Activated CD4-positive, alpha-beta memory T cell treated with anti-CD3 and anti-CD28 coated beads, Interleukin-2, amount 10 ng/mL, durations not matched to agents 7 days and 5 days (primary cell): ENCODE measurements at regions of chr14 and their contacts with region 1.

Region 1: DNA sequence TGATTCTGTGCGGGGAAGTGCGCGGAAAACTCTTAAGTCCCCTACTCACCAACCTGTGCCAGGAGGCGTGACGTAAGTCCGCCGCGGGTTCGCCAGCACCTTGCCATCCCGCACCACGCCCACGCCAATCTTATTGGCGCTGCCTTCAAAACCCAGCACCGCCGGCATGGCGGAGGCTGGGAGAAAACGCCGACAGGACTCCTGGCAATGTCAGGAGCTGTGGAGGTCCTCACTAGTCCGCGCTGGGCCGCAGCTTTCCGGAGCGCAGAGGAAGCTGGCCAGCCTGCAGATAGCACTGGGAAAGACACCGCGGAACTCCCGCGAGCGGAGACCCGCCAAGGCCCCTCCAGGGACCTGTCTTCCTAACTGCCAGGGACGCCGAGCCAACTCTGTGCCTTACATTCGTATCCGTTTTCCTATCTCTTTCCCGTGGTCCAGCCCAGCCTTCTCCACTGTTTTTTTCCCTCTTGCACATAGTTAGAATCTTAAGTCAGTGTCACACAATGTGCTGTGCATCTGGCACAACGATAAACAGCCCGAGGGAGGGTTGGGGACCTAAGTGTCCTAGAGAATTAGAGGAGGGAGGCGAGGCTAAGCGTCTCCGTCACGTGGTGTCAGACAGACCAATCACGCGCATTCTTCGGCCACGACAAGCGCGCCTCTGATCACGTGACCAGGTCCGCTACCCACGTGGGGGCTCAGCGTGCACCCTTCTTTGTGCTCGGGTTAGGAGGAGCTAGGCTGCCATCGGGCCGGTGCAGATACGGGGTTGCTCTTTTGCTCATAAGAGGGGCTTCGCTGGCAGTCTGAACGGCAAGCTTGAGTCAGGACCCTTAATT is at the starts of genes APEX1 and OSGEP:
- DNase-seq: peak; percentile 99
- H3K4me3 Mint-ChIP-seq: no peak within 1 kb of the TSS
- H3K27ac Mint-ChIP-seq: no peak within 1 kb of the TSS
- H3K4me1 Mint-ChIP-seq: peaks cover 33% of the 10 kb centered on the region
- H3K27me3 Mint-ChIP-seq: no peaks in the 10 kb centered on the region
- total RNA-seq, gene APEX1: 91.9 to 103 TPM
- total RNA-seq, gene OSGEP: 35.8 to 40.3 TPM

Region 2: GRCh38 chr14:20305265-20306078 is 149.3 kb before region 1 on chr14 and contains the start of gene TTC5:
- CTCF ChIA-PET with region 1: no interaction called
- POLR2A ChIA-PET with region 1: no interaction called
- DNase-seq: peak; percentile 91
- H3K4me3 Mint-ChIP-seq: peak within 1 kb of the TSS; percentile 83
- H3K27ac Mint-ChIP-seq: peak within 1 kb of the TSS; percentile 67
- H3K4me1 Mint-ChIP-seq: peaks cover 32% of the 10 kb centered on the region
- H3K27me3 Mint-ChIP-seq: no peaks in the 10 kb centered on the region
- total RNA-seq, gene TTC5: 20.5 to 21.2 TPM

Region 3: GRCh38 chr14:20332788-20333493 is 121.8 kb before region 1 on chr14 and contains the start of gene CCNB1IP1:
- CTCF ChIA-PET with region 1: interaction called, 3 read pairs
- POLR2A ChIA-PET with region 1: interaction called, 12 read pairs
- DNase-seq: peak; percentile 52
- H3K4me3 Mint-ChIP-seq: peak within 1 kb of the TSS; percentile 99
- H3K27ac Mint-ChIP-seq: peak within 1 kb of the TSS; percentile 91
- H3K4me1 Mint-ChIP-seq: peaks cover 60% of the 10 kb centered on the region
- H3K27me3 Mint-ChIP-seq: peaks cover 4% of the 10 kb centered on the region
- total RNA-seq, gene CCNB1IP1: 39.3 to 43.4 TPM